ENCODE measurements at regions of chr4 and their contacts with region 1.

Region 1: GRCh38 chr4:337143-337931 is at the start of gene ZNF141:
- DNase-seq: peak; percentile 92 to 99
- ATAC-seq: peak; percentile 96 to 99 (median 98)
- H3K4me3 ChIP-seq: peak within 1 kb of the TSS; percentile 65 to 97 (median 84)
- H3K27ac ChIP-seq: peak within 1 kb of the TSS; percentile 73 to 98 (median 96)
- H3K4me1 ChIP-seq: peaks cover 3 to 34% (median 23%) of the 10 kb centered on the region in 9 donors
- H3K27me3 ChIP-seq: no peaks in the 10 kb centered on the region
- CTCF ChIP-seq: no peak
- total RNA-seq, gene ZNF141: 6.3 to 10.8 (median 7.8) TPM

Region 2: DNA sequence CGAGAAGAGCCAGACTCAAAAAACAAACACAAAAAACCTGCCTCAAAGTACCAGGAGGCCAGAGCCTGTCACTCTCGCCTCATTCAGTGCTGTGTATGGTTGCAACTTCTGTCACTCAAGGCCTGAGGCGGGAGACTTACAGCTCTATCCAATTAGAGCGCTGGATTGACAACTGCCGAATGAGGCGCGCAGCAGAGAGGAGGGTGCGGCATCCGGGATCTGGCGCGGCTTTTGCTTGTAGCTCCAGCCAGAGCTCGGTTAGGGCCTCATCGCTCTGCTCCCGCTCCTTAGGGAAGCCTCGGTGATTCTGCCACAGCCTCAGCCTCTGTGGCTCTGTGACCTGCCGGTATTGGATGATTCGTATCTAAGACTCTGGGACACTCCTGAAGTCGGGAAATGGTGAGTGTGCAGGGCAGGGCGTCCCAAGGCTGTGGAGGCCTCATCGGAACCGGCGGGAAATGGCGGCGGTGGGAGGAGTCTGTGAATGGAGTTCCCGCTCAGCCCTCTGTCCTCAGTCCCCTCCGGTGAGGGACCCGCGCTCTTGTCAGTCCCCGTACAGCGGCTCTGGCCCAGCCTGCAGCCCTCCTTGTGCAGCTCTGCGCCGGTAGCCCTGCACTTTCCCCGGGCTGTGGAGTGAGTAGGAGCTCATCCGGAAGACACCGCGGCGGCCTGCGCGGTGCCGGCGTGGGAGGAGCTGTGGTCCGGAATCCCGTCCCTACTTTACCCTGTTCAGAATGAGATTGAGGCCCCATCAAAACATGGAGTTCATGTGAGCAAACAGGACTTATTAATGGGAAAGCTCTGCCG is 212.9 kb before region 1 on chr4 and contains the start of gene ZNF718:
- intact Hi-C with region 1: no loop called
- DNase-seq: peak; percentile 89 to 96
- ATAC-seq: peak; percentile 99 to 100 (median 100)
- H3K4me3 ChIP-seq: peak within 1 kb of the TSS; percentile 58 to 98 (median 84)
- H3K27ac ChIP-seq: peak within 1 kb of the TSS; percentile 78 to 95 (median 88)
- H3K4me1 ChIP-seq: peaks cover 7 to 23% (median 15%) of the 10 kb centered on the region in 9 donors
- H3K27me3 ChIP-seq: no peaks in the 10 kb centered on the region
- CTCF ChIP-seq: no peak
- total RNA-seq, gene ZNF718: 2.2 to 4.7 (median 3.1) TPM

Region 3: GRCh38 chr4:242121-242848 is 95.1 kb before region 1 on chr4:
- intact Hi-C with region 1: loop called in 2 of 10 experiments (anchors 10 kb)
- DNase-seq: peak; percentile 50 to 70
- ATAC-seq: peak; percentile 78 to 99 (median 96)
- H3K4me3 ChIP-seq: peak overlapping the region in 9 of 10 donors; percentile 37 to 65 (median 56)
- H3K27ac ChIP-seq: peak overlapping the region in 7 of 10 donors; percentile 30 to 67 (median 53)
- H3K4me1 ChIP-seq: peaks cover 0 to 17% (median 12%) of the 10 kb centered on the region in 9 donors
- H3K27me3 ChIP-seq: no peaks in the 10 kb centered on the region
- CTCF ChIP-seq: peak; percentile 88 to 96 (median 93)

Region 4: DNA sequence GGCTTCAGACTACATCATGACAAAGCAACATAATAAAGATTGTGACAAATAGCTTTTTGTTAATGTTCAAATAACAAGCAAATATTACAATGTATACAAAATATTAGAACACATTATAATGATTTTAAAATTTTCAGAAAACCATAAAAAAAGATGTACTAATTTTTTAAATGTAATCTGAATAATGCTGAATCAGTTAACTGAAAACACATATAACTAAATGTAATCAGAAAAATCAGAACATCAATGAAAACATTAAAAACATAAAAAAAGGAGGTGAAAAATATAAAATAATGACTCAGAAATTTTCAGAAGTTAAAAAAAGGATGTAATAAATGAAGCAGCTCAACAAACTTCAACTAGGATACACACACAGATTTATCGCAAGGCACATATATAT is 108.1 kb after region 1 on chr4:
- intact Hi-C with region 1: no loop called
- DNase-seq: no peak
- ATAC-seq: no peak
- H3K4me3 ChIP-seq: no peak overlapping the region
- H3K27ac ChIP-seq: no peak overlapping the region
- H3K4me1 ChIP-seq: no peaks in the 10 kb centered on the region
- H3K27me3 ChIP-seq: no peaks in the 10 kb centered on the region
- CTCF ChIP-seq: no peak

Region 5: GRCh38 chr4:566508-567295 is 229.4 kb after region 1 on chr4:
- intact Hi-C with region 1: no loop called
- DNase-seq: no peak
- ATAC-seq: no peak
- H3K4me3 ChIP-seq: no peak overlapping the region
- H3K27ac ChIP-seq: no peak overlapping the region
- H3K4me1 ChIP-seq: no peaks in the 10 kb centered on the region
- H3K27me3 ChIP-seq: peaks cover 0 to 46% (median 32%) of the 10 kb centered on the region in 7 donors
- CTCF ChIP-seq: no peak

Region 6: GRCh38 chr4:637536-638280 is 300.4 kb after region 1 on chr4:
- intact Hi-C with region 1: loop called in 1 of 10 experiments (anchors 10 kb)
- DNase-seq: no peak
- ATAC-seq: no peak
- H3K4me3 ChIP-seq: no peak overlapping the region
- H3K27ac ChIP-seq: no peak overlapping the region
- H3K4me1 ChIP-seq: no peaks in the 10 kb centered on the region
- H3K27me3 ChIP-seq: peaks cover 4 to 51% (median 25%) of the 10 kb centered on the region in 7 donors
- CTCF ChIP-seq: no peak

Measured in heart right ventricle (tissue), 16 donors.